PC-9 (cell line): ENCODE measurements at regions of chr16 and their contacts with region 1.

Region 1: DNA sequence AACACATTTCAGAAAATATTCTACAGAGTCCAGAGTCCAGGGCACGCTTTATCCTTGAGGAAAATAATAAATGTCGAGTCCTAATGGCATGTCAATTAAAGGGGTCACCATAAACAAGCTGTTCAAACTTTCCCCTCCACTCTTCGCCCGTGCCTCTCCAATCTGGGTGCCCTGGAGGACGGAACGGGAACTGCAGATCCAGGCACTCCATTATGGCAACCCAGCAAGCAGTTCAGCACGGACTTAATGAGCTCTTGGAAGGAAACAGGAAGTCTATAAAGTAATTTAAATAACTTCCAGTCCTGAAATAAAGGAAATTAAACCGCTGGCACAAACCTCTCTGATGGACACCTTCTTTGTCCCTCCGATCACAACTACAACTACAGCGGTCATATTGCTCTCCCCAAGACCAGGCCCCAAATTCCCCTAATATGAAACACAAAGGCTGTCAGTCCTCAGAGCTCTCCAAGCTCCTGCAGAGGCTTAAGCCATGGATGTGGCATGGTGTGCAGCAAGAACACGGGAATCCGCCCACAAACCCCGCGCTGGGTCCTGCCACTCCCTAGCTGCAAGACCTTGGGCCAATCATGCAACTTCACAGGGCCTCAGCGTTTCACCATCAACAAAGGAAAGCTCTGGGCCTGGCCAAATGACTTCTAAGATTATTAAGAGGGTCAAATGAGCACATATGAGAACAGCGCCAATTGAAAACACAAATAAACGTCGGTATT is 52.6 kb downstream of the ZFHX3 start:
- DNase-seq: no peak
- H3K4me3 ChIP-seq: no peak overlapping the region
- H3K27ac ChIP-seq: peak overlapping the region; percentile 91
- H3K4me1 ChIP-seq: peaks cover 86% of the 10 kb centered on the region
- H3K27me3 ChIP-seq: no peaks in the 10 kb centered on the region
- CTCF ChIP-seq: peak; percentile 68

Region 2: GRCh38 chr16:72847187-72848027 is 147.9 kb before region 1 on chr16:
- CTCF ChIA-PET with region 1: no interaction called
- POLR2A ChIA-PET with region 1: no interaction called
- intact Hi-C with region 1: loop called (anchors 2 kb)
- DNase-seq: peak in 1 of 2 experiments; percentile 12
- H3K4me3 ChIP-seq: no peak overlapping the region
- H3K27ac ChIP-seq: no peak overlapping the region
- H3K4me1 ChIP-seq: peaks cover 19% of the 10 kb centered on the region
- H3K27me3 ChIP-seq: no peaks in the 10 kb centered on the region
- CTCF ChIP-seq: peak; percentile 47; the same call in 1 of the 2 replicates

Region 3: DNA sequence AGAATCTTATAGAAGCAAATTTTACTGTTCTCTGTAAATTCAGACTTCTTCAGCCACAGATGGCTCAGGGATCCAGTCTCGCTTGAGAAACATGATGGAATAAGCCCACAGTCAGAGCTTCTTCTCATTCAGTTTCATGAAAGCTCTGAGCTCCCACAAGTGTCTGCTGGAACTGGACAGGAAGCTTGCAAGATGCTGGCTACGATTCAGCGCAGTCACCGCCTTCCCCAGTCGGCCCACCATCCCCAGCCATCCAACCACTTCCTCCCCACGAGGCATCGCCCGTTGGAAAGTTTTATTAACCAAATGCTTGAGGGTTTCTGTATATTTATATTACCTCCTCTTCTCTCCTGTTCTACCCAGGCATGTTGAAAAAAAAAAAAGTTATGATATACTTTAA is 119.1 kb before region 1 on chr16:
- CTCF ChIA-PET with region 1: no interaction called
- POLR2A ChIA-PET with region 1: no interaction called
- intact Hi-C with region 1: loop called (anchors 1 kb)
- DNase-seq: peak; percentile 46 to 58
- H3K4me3 ChIP-seq: peak overlapping the region; percentile 18; the same call in 1 of the 2 replicates
- H3K27ac ChIP-seq: peak overlapping the region; percentile 95
- H3K4me1 ChIP-seq: peaks cover 46% of the 10 kb centered on the region
- H3K27me3 ChIP-seq: no peaks in the 10 kb centered on the region
- CTCF ChIP-seq: no peak

Region 4: DNA sequence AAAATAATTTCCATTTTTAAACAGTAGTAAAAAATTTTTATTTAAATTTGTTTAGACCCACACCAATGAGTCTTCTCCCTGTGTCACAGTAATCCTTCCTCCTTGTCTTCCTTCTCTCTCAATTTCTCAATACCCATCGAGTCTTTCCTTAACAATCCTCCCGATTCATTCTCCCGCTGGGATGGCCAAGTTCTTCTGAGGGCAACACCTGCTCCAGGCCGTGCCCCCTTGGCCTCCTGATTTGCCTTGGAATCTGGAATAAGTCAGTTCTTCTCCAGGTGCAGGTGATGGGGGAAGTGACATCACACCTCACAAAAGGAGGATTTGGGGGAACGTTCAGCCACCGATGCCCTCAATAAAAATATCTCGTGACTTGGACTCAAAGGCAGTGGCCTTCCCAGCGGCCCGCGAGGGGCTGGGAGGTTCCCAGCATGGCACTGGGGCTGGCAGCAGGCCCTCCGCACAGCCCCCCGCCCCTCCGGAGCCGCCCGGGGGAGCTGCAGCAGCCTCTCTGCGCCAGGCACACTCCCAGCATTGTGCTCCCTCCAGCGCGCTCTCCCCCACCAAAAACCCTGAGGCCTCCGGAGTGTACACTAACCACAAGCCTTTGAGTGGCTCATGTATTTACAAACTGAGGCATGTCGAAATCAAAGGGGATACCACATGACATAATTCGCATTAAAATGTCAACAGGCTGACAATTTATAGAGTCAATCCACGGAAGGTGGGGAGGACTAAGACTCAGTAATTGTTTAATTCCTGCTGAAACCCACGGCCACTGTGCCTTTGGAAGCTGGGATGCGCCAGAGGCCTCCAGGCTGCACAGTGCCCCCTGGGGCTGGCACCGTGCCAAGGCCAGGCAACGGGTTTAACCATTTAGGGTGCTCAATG is 67.9 kb before region 1 on chr16:
- CTCF ChIA-PET with region 1: no interaction called
- POLR2A ChIA-PET with region 1: no interaction called
- intact Hi-C with region 1: loop called (anchors 2 kb)
- DNase-seq: peak; percentile 77 to 97
- H3K4me3 ChIP-seq: peak overlapping the region; percentile 53; the same call in 1 of the 2 replicates
- H3K27ac ChIP-seq: peak overlapping the region; percentile 78
- H3K4me1 ChIP-seq: peaks cover 35% of the 10 kb centered on the region
- H3K27me3 ChIP-seq: no peaks in the 10 kb centered on the region
- CTCF ChIP-seq: no peak

Region 5: DNA sequence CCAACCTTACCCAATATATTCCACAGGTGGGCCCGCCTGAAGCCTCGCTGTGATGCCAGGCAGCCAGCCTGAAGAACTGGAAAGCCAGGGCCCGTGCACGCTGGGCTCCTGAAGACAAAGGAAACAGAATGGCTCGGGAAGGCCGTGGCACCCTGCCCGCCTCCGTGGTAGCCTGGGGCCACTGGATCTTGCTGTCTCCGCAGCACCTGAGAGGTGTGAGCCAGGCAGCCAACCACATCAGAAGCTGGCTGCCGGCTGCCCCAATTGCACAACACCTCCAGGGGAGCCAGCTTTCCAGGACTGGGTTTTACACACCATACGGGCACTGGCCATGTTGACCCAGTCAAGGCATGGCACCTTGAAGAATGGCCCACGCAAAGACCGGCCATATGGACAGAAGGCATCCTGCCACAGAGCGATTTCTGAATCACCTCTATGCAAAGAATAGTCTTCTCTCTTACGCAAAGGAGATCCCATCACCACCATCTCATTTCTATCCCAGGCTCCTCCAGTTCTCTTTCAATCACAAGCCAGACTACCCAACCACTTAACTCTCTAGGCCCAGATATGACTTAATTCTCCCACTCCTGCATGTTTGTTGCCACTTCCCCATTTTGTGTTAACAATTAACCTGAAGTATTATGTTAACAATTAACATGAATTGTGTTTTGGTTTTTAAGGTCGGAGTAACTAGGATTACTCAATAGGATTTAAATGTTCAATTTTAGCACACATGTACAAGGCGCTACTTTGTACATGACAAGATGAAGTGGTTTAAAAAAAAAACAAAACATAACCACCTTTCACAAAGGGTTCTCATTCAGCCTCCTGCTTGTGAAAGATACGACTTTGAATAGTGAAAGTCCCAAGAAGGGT is 20.5 kb after region 1 on chr16:
- CTCF ChIA-PET with region 1: no interaction called
- POLR2A ChIA-PET with region 1: interaction called, 6 read pairs
- intact Hi-C with region 1: loop called (anchors 1 kb)
- DNase-seq: peak; percentile 94 to 96
- H3K4me3 ChIP-seq: no peak overlapping the region; the same call in 1 of the 2 replicates
- H3K27ac ChIP-seq: peak overlapping the region; percentile 49
- H3K4me1 ChIP-seq: peaks cover 70% of the 10 kb centered on the region
- H3K27me3 ChIP-seq: no peaks in the 10 kb centered on the region
- CTCF ChIP-seq: no peak

Region 6: GRCh38 chr16:73036074-73036826 is 40.9 kb after region 1 on chr16:
- CTCF ChIA-PET with region 1: interaction called, 3 read pairs
- POLR2A ChIA-PET with region 1: interaction called, 3 read pairs
- intact Hi-C with region 1: loop called (anchors 1 kb)
- DNase-seq: peak; percentile 49 to 81
- H3K4me3 ChIP-seq: peak overlapping the region; percentile 36; the same call in 1 of the 2 replicates
- H3K27ac ChIP-seq: peak overlapping the region; percentile 57
- H3K4me1 ChIP-seq: peaks cover 50% of the 10 kb centered on the region
- H3K27me3 ChIP-seq: no peaks in the 10 kb centered on the region
- CTCF ChIP-seq: no peak

Region 7: GRCh38 chr16:73172241-73172972 is 177.1 kb after region 1 on chr16:
- CTCF ChIA-PET with region 1: no interaction called
- POLR2A ChIA-PET with region 1: no interaction called
- intact Hi-C with region 1: loop called (anchors 5 kb)
- DNase-seq: peak in 1 of 2 experiments; percentile 23
- H3K4me3 ChIP-seq: no peak overlapping the region
- H3K27ac ChIP-seq: no peak overlapping the region
- H3K4me1 ChIP-seq: peaks cover 6% of the 10 kb centered on the region; the same call in 1 of the 2 replicates
- H3K27me3 ChIP-seq: no peaks in the 10 kb centered on the region
- CTCF ChIP-seq: peak; percentile 54